MCF 10A (cell line): ENCODE measurements at regions of chr15 and their contacts with region 1.

Region 1: GRCh38 chr15:33547876-33548275 is 237.1 kb downstream of the RYR3 start:
- DNase-seq: peak; percentile 60
- H3K4me3 Mint-ChIP-seq: no peak overlapping the region
- H3K27ac Mint-ChIP-seq: no peak overlapping the region
- H3K4me1 Mint-ChIP-seq: peaks cover 3% of the 10 kb centered on the region
- H3K27me3 Mint-ChIP-seq: peaks cover 64% of the 10 kb centered on the region
- CTCF ChIP-seq: no peak

Region 2: DNA sequence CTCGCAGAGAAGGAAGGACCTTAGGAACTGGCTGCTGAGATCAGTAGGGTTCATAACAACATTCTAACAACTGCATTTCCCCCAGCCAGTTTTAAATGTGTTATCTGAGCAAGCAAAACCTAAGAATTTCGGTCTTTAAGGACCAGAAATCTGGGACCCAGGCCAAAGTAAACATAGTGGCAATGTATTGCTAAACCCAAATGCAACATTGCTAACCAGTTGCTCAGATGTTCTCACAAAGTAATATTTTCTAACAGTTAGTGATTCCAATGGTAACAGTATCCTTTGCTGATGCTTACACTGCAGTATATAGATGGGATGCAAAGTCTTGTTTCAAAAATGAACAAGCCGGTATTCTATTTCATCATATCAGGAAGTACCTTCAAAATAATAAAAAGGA is 17.2 kb after region 1 on chr15:
- CTCF ChIA-PET with region 1: interaction called, 4 read pairs
- POLR2A ChIA-PET with region 1: no interaction called
- intact Hi-C with region 1: loop called (anchors 2 kb)
- DNase-seq: peak; percentile 70
- H3K4me3 Mint-ChIP-seq: no peak overlapping the region
- H3K27ac Mint-ChIP-seq: no peak overlapping the region
- H3K4me1 Mint-ChIP-seq: peaks cover 9% of the 10 kb centered on the region
- H3K27me3 Mint-ChIP-seq: peaks cover 44% of the 10 kb centered on the region
- CTCF ChIP-seq: no peak

Region 3: DNA sequence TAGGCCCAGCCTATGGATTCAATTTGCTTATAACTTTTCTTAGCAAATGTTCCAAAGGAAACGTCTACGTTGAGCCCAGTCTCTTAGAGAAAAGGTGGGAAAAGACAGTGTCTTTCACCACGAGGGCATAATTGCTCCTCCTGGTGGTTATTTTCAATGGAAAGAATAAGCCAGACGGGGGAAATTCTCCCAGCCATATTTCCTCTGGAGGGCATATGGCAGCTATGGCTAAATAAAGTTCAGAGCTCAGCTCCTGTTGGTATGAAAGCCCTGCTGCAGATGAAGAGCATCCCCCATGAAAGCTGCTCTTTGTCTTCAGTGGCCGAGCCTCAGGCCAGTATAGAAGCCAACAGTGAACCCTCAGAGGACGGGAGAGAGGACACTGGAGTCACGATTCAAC is 60.8 kb after region 1 on chr15:
- CTCF ChIA-PET with region 1: no interaction called
- POLR2A ChIA-PET with region 1: no interaction called
- intact Hi-C with region 1: no loop called
- DNase-seq: peak; percentile 30
- H3K4me3 Mint-ChIP-seq: no peak overlapping the region
- H3K27ac Mint-ChIP-seq: no peak overlapping the region
- H3K4me1 Mint-ChIP-seq: no peaks in the 10 kb centered on the region
- H3K27me3 Mint-ChIP-seq: peaks cover 13% of the 10 kb centered on the region
- CTCF ChIP-seq: peak; percentile 21